B cell (primary cell): ENCODE measurements at regions of chr11 and their contacts with region 1.

Region 1: GRCh38 chr11:83026229-83026628 is 45.5 kb downstream of the RAB30 start:
- DNase-seq: no peak
- ATAC-seq: no peak
- H3K4me3 ChIP-seq: no peak overlapping the region
- H3K4me3 Mint-ChIP-seq: peak overlapping the region; percentile 13
- H3K27ac ChIP-seq: peak overlapping the region in 1 of 2 donors; percentile 24
- H3K27ac Mint-ChIP-seq: no peak overlapping the region
- H3K4me1 ChIP-seq: peaks cover 53 to 56% of the 10 kb centered on the region in 2 donors
- H3K4me1 Mint-ChIP-seq: peaks cover 71% of the 10 kb centered on the region
- H3K27me3 ChIP-seq: no peaks in the 10 kb centered on the region
- H3K27me3 Mint-ChIP-seq: no peaks in the 10 kb centered on the region
- CTCF ChIP-seq: no peak

Region 2: GRCh38 chr11:83007909-83008580 is 18.2 kb before region 1 on chr11:
- CTCF ChIA-PET with region 1: interaction called, 3 read pairs
- POLR2A ChIA-PET with region 1: no interaction called
- intact Hi-C with region 1: loop called (anchors 2 kb)
- DNase-seq: peak; percentile 45
- ATAC-seq: peak; percentile 39
- H3K4me3 ChIP-seq: no peak overlapping the region
- H3K4me3 Mint-ChIP-seq: peak overlapping the region; percentile 72
- H3K27ac ChIP-seq: peak overlapping the region in 1 of 2 donors; percentile 65
- H3K27ac Mint-ChIP-seq: peak overlapping the region; percentile 84
- H3K4me1 ChIP-seq: peaks cover 47 to 50% of the 10 kb centered on the region in 2 donors
- H3K4me1 Mint-ChIP-seq: peaks cover 74% of the 10 kb centered on the region
- H3K27me3 ChIP-seq: no peaks in the 10 kb centered on the region
- H3K27me3 Mint-ChIP-seq: no peaks in the 10 kb centered on the region
- CTCF ChIP-seq: no peak

Region 3: DNA sequence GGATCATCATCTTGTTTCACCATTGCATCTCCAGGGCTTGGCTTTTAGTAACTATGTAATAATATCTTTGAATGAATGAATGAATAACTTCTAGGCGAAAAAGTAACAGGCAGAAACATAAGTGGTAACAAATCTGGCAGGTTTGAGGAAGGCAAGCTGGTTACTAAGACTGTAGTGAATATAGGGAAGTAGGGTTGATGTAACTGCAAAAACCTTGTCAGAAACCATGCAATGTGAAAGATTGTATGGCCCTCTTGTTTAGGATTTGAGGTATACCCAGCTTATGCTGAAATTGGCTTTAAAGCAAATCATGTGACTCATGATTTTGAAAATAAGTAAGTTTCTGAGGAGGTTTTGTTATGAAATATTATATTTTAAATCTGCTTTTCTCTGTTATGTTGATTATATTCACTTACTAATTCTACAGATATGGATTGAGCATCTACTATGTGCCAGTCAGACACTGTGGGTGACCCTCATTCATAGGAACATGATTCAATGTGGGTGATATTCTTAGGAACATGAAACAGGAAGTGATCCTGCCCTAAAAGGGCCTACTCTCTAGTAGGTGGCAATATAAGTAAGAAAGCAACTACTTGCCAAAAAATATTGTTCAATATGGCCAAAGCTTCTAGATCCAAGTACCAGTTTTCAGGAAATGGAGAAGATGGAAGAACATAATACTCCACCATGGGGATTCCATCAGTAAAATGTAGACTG is 375.4 kb after region 1 on chr11:
- CTCF ChIA-PET with region 1: no interaction called
- POLR2A ChIA-PET with region 1: no interaction called
- intact Hi-C with region 1: no loop called
- DNase-seq: no peak
- ATAC-seq: no peak
- H3K4me3 ChIP-seq: no peak overlapping the region
- H3K4me3 Mint-ChIP-seq: no peak overlapping the region
- H3K27ac ChIP-seq: no peak overlapping the region
- H3K27ac Mint-ChIP-seq: no peak overlapping the region
- H3K4me1 ChIP-seq: no peaks in the 10 kb centered on the region
- H3K4me1 Mint-ChIP-seq: peaks cover 4% of the 10 kb centered on the region
- H3K27me3 ChIP-seq: no peaks in the 10 kb centered on the region
- H3K27me3 Mint-ChIP-seq: peaks cover 5% of the 10 kb centered on the region
- CTCF ChIP-seq: no peak